ENCODE measurements at regions of chr9 and their contacts with region 1.

Region 1: DNA sequence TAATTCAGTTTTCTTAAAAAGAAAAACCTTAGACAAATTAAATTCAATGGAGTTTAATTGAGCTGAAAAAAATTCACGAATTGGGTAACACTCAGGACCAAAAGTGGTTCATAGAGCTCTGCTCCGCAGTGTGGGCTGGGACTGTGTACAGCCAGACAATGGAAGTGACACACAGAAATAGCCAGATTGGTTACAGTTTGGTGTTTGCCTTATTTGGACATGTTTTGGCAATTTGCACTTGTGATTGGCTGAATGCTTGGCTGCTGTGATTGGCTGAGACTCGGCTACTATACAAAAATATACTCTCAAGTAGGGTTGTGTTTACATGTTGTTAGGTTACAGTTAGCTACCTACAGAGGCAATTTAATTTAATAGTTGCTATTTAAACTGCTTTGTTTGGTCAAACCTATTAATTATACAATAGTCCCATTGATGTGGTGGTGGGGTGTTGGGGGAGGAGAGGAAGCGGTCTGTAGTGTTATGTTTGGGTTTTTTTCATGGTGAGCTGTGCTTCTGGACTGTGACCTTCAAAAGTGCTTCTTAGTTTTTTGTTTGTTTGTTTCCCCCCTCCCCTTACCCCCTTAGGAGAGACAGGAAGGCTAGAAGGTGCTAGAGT is 95.2 kb downstream of the CNTLN start:
- DNase-seq: peak; percentile 6
- ATAC-seq: peak; percentile 66
- H3K4me3 ChIP-seq: no peak overlapping the region
- H3K27ac ChIP-seq: peak overlapping the region; percentile 65
- H3K4me1 ChIP-seq: peaks cover 17% of the 10 kb centered on the region
- H3K27me3 ChIP-seq: no peaks in the 10 kb centered on the region
- CTCF ChIP-seq: no peak
- EP300 ChIP-seq: no peak
- POLR2A ChIP-seq: no peak
- RAD21 ChIP-seq: no peak

Region 2: DNA sequence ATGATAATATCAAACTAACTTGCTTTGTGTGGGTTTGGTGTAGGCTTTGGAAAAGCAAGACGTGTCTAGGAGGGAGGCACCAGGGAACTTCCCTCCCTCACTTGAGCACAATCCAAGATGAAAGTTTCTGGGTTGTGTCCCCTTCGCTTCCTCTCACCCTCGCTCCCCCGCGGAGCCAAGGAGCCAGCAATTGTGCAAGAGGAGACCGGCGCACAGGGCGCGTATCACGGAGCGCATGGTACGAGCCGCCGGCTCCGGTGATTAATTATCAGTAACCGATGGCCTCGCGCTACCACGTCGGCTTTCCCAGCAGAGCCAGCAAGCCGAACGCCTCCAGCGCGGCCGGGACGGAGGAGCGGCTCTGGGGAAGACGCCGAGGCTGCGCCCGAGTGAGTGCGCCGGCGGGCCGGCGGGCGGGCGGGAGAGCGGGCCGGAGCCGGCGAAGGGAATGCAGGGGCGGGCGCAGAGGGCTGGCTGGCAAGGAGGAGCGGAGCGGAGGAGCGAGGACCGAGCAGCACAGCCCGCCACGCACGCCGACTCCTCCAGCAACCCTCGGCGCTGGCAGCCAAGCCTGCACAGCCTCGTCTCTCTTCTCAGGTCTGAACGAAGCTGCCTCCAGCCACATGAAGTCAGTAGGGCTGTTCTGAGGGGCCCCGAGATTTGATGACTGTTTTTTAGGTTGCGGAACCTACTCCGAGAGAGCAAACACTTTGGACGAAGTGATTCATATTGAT is 503.2 kb before region 1 on chr9:
- CTCF ChIA-PET with region 1: no interaction called
- POLR2A ChIA-PET with region 1: no interaction called
- in situ Hi-C with region 1: no loop called
- intact Hi-C with region 1: loop called (anchors 5 kb)
- DNase-seq: no peak
- ATAC-seq: peak; percentile 93
- H3K4me3 ChIP-seq: peak overlapping the region in 1 of 3 experiments; percentile 51; a peak in 1 of 6 replicates
- H3K27ac ChIP-seq: no peak overlapping the region
- H3K4me1 ChIP-seq: no peaks in the 10 kb centered on the region
- H3K27me3 ChIP-seq: peaks cover 5 to 37% of the 10 kb centered on the region in 2 experiments; a peak in 4 of 5 replicates
- CTCF ChIP-seq: no peak
- EP300 ChIP-seq: no peak
- POLR2A ChIP-seq: no peak
- RAD21 ChIP-seq: no peak

Region 3: DNA sequence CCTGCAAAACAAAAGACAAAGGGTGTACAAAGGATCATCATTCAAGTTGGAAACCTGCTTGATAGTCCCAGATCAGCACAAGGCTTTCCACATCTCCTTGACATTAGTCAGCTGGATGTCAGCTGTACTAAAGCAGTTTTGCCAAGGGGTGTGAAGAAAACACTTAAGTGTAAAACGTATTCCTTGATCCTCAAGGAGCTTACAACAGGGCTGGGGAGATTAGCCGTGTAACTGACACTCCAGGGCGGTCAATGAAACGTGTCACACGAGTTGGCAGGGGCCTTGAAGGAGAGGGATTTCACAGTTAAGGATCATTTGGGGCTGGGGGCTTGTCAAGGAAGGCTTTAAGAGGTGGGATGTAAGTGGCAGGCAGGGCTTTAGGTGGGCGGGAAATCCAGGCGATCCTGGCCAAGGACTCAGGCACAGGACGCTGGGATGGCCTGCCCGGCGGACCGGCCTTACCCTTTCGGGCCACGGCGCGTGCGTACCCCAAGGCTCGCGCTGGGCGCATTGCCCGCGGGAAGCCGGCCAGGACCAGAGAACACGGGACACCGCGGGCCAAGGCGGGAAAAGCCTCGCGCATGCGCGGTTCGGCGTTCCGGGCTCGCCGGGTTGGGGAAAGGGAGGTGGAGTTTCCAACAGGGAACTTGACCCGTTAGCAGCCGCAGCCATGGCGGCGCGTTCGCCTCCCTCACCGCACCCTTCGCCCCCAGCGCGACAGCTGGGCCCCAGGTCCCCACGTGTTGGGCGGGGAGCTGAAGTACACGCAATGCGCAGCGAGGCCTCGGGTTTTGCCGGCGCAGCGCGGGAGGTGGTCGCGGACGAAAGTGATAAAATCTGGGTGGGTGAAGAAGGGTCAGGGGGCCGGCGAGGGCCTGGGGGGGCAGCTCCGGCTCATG is 95.4 kb before region 1 on chr9 and contains the start of gene CNTLN:
- CTCF ChIA-PET with region 1: no interaction called
- POLR2A ChIA-PET with region 1: no interaction called
- in situ Hi-C with region 1: no loop called
- intact Hi-C with region 1: loop called (anchors 10 kb)
- DNase-seq: peak; percentile 67
- ATAC-seq: peak; percentile 91
- H3K4me3 ChIP-seq: peak within 1 kb of the TSS; percentile 59 to 78 (median 77)
- H3K27ac ChIP-seq: peak within 1 kb of the TSS; percentile 68
- H3K4me1 ChIP-seq: peaks cover 30% of the 10 kb centered on the region
- H3K27me3 ChIP-seq: no peaks in the 10 kb centered on the region
- CTCF ChIP-seq: no peak
- EP300 ChIP-seq: no peak
- POLR2A ChIP-seq: peak; percentile 76 to 85
- RAD21 ChIP-seq: no peak
- total RNA-seq, gene CNTLN: 5.7 and 6.4 TPM in 2 replicates

Region 4: DNA sequence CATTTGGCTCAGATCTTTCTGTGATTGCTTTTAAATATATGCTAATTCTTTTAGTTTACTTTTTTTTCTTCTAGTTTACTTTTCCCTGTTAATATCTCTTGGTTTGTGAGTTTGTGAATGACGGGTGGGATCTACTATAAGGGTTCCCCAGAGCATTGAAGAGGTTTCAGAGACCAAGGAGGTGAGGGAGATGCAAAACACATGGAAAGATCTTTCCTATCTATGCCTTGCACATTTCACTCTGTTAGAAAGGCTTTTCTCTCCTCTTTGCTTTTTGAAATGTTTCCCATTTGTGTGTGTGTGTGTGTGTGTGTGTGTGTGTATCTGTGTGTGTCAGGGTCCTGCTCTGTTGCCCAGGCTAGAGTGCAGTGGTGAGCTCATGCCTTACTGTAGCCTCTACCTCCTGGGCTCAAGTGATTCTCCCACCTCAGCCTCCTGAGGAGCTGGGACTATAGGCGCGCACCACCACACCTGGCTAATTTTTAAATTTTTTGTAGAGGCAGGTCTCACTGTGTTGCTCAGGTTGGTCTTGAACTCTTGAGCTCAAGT is 44.5 kb before region 1 on chr9:
- CTCF ChIA-PET with region 1: no interaction called
- POLR2A ChIA-PET with region 1: no interaction called
- in situ Hi-C with region 1: loop called (anchors 10 kb)
- intact Hi-C with region 1: no loop called
- DNase-seq: no peak
- ATAC-seq: no peak
- H3K4me3 ChIP-seq: no peak overlapping the region
- H3K27ac ChIP-seq: no peak overlapping the region
- H3K4me1 ChIP-seq: no peaks in the 10 kb centered on the region
- H3K27me3 ChIP-seq: no peaks in the 10 kb centered on the region
- CTCF ChIP-seq: no peak
- EP300 ChIP-seq: no peak
- POLR2A ChIP-seq: no peak
- RAD21 ChIP-seq: no peak